ENCODE measurements at regions of chr18 and their contacts with region 1.

Region 1: DNA sequence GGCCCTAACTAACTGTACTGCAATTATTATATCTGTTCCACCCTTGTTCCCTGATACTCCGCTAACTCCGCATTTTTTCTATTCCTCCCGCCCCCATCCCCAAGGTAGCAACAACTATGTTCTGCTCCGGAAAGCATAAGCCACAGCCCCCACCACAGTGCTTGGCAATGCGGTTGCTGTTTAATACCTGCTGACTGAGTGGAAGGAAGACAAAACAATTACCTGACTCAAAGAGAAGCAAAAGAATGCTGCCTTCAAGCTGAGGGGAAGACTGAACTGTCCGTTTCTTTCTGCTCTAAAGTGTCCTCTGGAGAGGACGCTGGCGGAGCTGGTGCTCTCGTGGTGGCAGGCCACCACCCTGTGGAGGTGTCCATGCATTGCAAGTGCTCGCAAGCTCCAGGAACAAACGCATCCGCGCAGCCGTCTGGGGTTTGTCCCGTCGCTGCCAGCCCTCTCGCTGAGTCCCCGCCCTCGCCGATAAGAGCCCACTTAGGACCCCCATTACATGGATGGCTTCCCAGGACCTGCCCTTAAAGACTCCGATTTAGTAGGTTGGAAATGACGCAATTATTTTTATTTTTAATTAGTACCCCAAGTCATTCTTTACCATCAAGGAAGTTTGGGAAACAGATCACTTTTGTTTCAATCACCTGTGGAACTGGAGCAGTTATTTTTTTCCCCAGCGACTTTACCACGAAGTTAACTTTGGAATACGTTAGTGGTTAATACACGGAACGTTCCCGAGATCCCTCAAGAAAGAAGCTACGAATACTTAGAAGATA is 1.6 kb upstream of the MYL12A start:
- DNase-seq: peak; percentile 96

Region 2: GRCh38 chr18:3151399-3152264 is 94.4 kb before region 1 on chr18:
- intact Hi-C with region 1: loop called (anchors 5 kb)
- DNase-seq: no peak

Region 3: GRCh38 chr18:3217948-3218647 is 27.9 kb before region 1 on chr18:
- intact Hi-C with region 1: loop called (anchors 1 kb)
- DNase-seq: no peak

Measured in cardiac septum (tissue), 1 donor.